Head of caudate nucleus (tissue), 42 donors: ENCODE measurements at regions of chr18 and their contacts with region 1.

Region 1: DNA sequence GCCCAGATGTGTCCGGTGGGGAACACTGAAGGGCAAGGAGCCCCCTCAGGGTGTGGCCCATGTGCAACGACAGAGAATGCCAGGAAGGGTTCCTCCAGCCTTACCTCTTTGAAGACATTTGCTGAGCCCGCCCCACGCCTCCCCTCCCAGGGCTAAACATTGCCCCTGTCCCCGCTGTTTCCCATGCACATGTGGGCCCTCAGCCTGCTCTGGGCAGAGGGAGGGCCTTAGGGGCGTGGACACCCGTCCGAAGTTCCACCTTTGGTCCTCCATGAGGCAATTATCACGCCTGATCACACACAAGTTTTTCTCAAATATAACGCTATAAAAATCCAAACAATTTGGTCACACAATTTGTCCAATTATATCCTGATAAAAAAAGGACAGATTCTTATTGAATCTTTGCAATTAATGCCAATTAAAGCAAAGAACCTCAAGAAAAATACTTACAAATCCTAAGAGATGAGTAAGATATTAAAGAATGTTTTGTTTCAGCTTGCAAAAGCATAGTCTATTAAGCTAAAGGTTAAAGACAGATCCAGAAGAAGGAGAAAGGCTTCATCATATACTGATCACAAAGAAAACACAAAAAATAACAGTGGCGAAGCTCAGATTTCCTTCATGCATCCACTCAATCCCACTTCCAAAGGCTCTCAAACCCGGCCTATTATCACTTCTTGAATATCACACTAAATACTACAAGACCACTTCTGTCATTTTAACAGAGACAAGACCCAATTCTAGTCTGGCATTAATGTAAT is 55.2 kb upstream of the LDLRAD4 start:
- DNase-seq: no peak

Region 2: DNA sequence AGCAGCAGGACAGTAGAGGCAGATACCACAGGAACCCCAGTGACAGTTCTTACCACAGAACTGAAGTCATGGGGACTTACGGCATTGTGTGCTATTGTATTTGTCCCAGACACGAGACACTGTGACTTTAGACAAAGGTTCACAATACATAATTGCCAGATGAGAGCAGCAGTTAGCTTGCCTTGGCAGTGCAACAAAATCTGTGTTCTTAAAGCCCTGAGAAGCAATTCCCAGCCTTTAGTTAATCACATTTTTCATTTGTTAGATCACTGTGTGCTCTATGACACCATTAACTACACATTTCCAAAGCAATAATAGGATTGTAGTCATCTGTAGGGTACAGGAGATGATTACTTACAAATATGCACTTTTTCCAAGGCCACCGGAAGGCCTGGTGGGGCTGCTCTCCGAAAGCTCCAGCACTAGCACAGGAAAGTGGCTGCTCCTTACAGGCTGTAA is 42.3 kb before region 1 on chr18:
- intact Hi-C with region 1: loop called (anchors 5 kb)
- DNase-seq: peak in 2 of 42 donors; percentile 2 to 37